Heart left ventricle (tissue), 16 donors: ENCODE measurements at regions of chr3 and their contacts with region 1.

Region 1: DNA sequence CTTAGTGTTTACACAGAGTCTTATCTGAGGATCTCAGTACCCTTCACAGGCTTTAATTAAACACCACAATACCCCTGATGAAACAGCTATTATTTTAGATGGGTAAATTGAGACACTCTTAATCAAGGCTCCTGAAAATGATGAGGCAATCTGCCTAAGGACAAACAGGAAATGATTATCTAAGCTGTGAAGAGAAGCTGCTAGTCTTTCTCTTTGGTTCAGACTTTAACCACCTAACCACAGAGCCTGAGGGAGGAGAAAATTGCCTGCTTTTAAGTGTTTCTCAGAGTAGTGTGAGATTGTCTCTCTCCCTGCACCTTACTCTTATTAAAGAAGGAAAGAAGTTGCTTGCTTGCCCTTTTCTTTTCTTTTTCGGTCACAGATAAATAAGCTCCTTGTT is 364.3 kb upstream of the ADAMTS9 start:
- DNase-seq: no peak
- ATAC-seq: no peak
- H3K4me3 ChIP-seq: no peak overlapping the region
- H3K27ac ChIP-seq: no peak overlapping the region
- H3K4me1 ChIP-seq: no peaks in the 10 kb centered on the region
- H3K27me3 ChIP-seq: no peaks in the 10 kb centered on the region
- CTCF ChIP-seq: no peak
- POLR2A ChIP-seq: no peak

Region 2: GRCh38 chr3:64533617-64534317 is 518.3 kb before region 1 on chr3:
- intact Hi-C with region 1: no loop called
- DNase-seq: peak; percentile 83 to 87 (median 85)
- ATAC-seq: peak; percentile 96 to 97 (median 96)
- H3K4me3 ChIP-seq: peak overlapping the region in 3 of 12 donors; percentile 12 to 34 (median 14)
- H3K27ac ChIP-seq: peak overlapping the region in 4 of 12 donors; percentile 20 to 60 (median 34)
- H3K4me1 ChIP-seq: peaks cover 0 to 14% (median 2%) of the 10 kb centered on the region in 12 donors
- H3K27me3 ChIP-seq: no peaks in the 10 kb centered on the region
- CTCF ChIP-seq: peak; percentile 61 to 94 (median 89)
- POLR2A ChIP-seq: no peak

Region 3: GRCh38 chr3:65238652-65239051 is 186.6 kb after region 1 on chr3:
- intact Hi-C with region 1: loop called in 1 of 10 experiments (anchors 5 kb)
- DNase-seq: no peak
- ATAC-seq: no peak
- H3K4me3 ChIP-seq: no peak overlapping the region
- H3K27ac ChIP-seq: no peak overlapping the region
- H3K4me1 ChIP-seq: no peaks in the 10 kb centered on the region
- H3K27me3 ChIP-seq: peaks cover 0 to 3% (median 0%) of the 10 kb centered on the region in 9 donors
- CTCF ChIP-seq: no peak
- POLR2A ChIP-seq: no peak